ENCODE measurements at regions of chr7 and their contacts with region 1.

Region 1: DNA sequence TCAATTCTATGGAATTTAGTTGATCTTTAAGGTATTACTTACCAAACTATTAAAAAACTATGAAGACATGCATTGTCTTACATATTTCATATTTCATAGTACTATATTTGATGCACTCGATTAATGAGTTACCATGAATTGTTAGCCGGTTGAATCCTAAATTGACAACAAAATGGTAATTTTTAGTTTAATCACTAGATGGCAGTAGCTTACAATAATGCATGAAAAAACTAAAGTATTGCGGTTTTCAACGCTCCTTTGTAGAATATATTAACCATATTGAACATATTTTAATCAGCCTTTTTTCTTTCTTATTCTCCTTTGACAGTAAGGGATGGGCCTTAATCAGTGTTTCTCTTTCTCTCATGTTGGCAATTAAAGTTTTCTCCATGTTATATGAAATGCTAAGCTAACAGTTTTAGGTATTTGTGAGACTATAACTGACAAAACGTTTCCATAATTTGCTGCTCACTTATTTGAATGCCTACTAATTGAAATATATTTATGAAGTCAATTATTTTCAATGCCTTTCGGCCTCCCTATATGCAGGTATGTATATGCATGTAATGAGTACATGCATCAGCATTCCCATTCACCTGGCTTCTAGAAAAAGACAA is 48.5 kb upstream of the ARL4A start:
- DNase-seq: peak in 4 of 5 donors; percentile 47 to 59 (median 54)
- H3K4me3 ChIP-seq: no peak overlapping the region
- H3K4me3 Mint-ChIP-seq: peak overlapping the region in 1 of 8 donors; percentile 22
- H3K27ac ChIP-seq: no peak overlapping the region
- H3K27ac Mint-ChIP-seq: no peak overlapping the region
- H3K4me1 ChIP-seq: peaks cover 17% of the 10 kb centered on the region
- H3K4me1 Mint-ChIP-seq: peaks cover 14 to 34% (median 20%) of the 10 kb centered on the region in 4 donors
- H3K27me3 ChIP-seq: no peaks in the 10 kb centered on the region
- H3K27me3 Mint-ChIP-seq: peaks cover 0 to 2% of the 10 kb centered on the region in 2 donors

Region 2: GRCh38 chr7:11193131-11193811 is 1445.7 kb before region 1 on chr7:
- CTCF ChIA-PET with region 1: no interaction called
- POLR2A ChIA-PET with region 1: no interaction called
- intact Hi-C with region 1: no loop called
- DNase-seq: no peak
- H3K4me3 ChIP-seq: no peak overlapping the region
- H3K4me3 Mint-ChIP-seq: no peak overlapping the region
- H3K27ac ChIP-seq: no peak overlapping the region
- H3K27ac Mint-ChIP-seq: no peak overlapping the region
- H3K4me1 ChIP-seq: no peaks in the 10 kb centered on the region
- H3K4me1 Mint-ChIP-seq: peaks cover 0 to 2% (median 0%) of the 10 kb centered on the region in 4 donors
- H3K27me3 ChIP-seq: no peaks in the 10 kb centered on the region
- H3K27me3 Mint-ChIP-seq: peaks cover 6 to 9% of the 10 kb centered on the region in 2 donors

Region 3: DNA sequence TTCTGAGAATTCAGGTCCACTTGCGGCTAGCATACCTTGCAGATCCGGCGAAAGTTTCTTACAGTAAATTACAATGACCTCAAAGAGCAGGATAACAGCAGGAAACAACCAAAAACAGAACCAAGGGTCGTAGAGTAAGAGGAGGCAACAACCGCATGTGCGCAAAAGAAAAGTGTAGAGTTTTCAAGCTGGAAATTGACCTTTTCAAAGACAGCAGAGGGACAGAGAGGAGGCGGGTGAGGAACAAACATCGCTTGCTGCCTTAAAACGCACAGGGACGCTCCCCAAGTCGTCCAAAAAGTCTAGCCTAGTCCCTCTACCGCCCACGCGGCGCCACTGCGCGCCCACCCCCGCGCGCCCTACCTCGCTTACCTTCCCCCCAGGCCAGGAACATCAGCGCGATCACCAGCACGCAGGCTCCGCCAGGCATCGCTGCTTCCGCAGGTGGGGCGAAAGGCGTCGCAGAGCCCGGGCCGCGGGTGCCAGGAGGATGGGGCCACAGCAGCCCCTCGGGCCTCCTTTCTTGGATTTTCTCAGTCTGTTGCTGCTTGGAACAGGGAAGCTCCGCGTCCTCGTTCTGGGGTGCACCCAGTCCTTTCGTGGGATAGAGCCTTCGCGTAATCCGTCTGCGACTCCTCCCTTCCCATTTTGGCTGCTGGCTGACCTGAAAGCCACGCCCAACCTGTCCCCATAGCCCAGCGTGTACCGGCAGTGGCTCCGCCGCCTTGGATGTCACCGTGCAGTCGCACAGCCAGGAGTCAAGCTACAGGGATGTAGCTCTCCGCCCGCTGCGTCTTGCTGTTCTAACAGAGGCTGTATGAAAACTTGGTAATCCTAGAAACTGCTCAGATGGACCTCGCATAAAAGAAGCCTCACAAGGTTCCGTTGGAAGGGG is 235.4 kb before region 1 on chr7 and contains the start of gene VWDE:
- CTCF ChIA-PET with region 1: no interaction called
- POLR2A ChIA-PET with region 1: no interaction called
- intact Hi-C with region 1: loop called (anchors 5 kb)
- DNase-seq: peak; percentile 31 to 70 (median 44)
- H3K4me3 ChIP-seq: peak within 1 kb of the TSS; percentile 38 to 54
- H3K4me3 Mint-ChIP-seq: peak within 1 kb of the TSS; percentile 82 to 95 (median 90)
- H3K27ac ChIP-seq: peak within 1 kb of the TSS; percentile 29
- H3K27ac Mint-ChIP-seq: peak within 1 kb of the TSS; percentile 30 to 92 (median 82)
- H3K4me1 ChIP-seq: peaks cover 13% of the 10 kb centered on the region
- H3K4me1 Mint-ChIP-seq: peaks cover 12 to 29% (median 17%) of the 10 kb centered on the region in 4 donors
- H3K27me3 ChIP-seq: no peaks in the 10 kb centered on the region
- H3K27me3 Mint-ChIP-seq: peaks cover 6 to 7% of the 10 kb centered on the region in 2 donors
- total RNA-seq, gene VWDE: 8.9 to 9.0 TPM

Region 4: GRCh38 chr7:12524794-12525386 is 114.1 kb before region 1 on chr7:
- CTCF ChIA-PET with region 1: interaction called, 4 read pairs
- POLR2A ChIA-PET with region 1: no interaction called
- intact Hi-C with region 1: loop called (anchors 5 kb)
- DNase-seq: peak in 4 of 5 donors; percentile 27 to 41 (median 33)
- H3K4me3 ChIP-seq: no peak overlapping the region
- H3K4me3 Mint-ChIP-seq: no peak overlapping the region
- H3K27ac ChIP-seq: no peak overlapping the region
- H3K27ac Mint-ChIP-seq: no peak overlapping the region
- H3K4me1 ChIP-seq: no peaks in the 10 kb centered on the region
- H3K4me1 Mint-ChIP-seq: peaks cover 0 to 1% (median 0%) of the 10 kb centered on the region in 4 donors
- H3K27me3 ChIP-seq: peaks cover 5% of the 10 kb centered on the region
- H3K27me3 Mint-ChIP-seq: peaks cover 13 to 20% of the 10 kb centered on the region in 2 donors

Region 5: DNA sequence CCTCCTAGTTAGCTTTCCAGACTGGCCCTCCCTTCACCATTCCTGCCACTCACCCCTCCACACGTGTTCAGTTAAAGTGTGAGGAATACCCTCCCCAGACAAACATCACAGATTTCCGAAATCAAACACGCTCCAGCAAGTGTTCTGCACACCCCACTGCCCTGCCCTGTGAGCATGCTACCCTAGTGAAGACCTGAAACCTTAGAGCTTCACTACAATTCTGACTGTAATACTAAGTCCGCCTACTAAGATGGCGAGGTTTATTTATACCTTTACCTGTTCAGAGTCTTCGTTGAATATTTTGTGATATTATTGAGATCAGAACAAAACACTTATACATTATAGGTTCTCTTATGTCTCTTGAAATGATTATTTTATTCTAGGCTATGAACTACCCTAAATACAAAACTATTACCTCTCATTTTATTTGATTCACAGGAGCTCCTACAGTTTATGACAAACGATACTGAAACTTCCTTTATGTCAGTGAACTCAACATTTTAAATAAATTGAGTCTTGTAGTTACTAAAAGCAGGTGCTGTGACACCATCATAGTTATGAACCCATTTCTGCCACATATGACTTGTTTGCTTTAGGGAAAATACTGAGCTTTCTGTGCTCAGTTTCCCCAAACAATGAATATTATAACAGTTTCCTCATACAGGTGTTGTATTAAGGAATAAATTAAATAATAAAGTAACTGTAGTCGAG is 59.9 kb before region 1 on chr7:
- CTCF ChIA-PET with region 1: no interaction called
- POLR2A ChIA-PET with region 1: no interaction called
- intact Hi-C with region 1: no loop called
- DNase-seq: no peak
- H3K4me3 ChIP-seq: no peak overlapping the region
- H3K4me3 Mint-ChIP-seq: no peak overlapping the region
- H3K27ac ChIP-seq: no peak overlapping the region
- H3K27ac Mint-ChIP-seq: no peak overlapping the region
- H3K4me1 ChIP-seq: no peaks in the 10 kb centered on the region
- H3K4me1 Mint-ChIP-seq: no peaks in the 10 kb centered on the region
- H3K27me3 ChIP-seq: no peaks in the 10 kb centered on the region
- H3K27me3 Mint-ChIP-seq: peaks cover 3 to 7% of the 10 kb centered on the region in 2 donors

Region 6: GRCh38 chr7:12674849-12675248 is 35.9 kb after region 1 on chr7:
- CTCF ChIA-PET with region 1: interaction called, 6 read pairs
- POLR2A ChIA-PET with region 1: no interaction called
- intact Hi-C with region 1: loop called (anchors 1 kb)
- DNase-seq: peak; percentile 68 to 80 (median 70)
- H3K4me3 ChIP-seq: no peak overlapping the region
- H3K4me3 Mint-ChIP-seq: peak overlapping the region in 5 of 8 donors; percentile 4 to 24 (median 14)
- H3K27ac ChIP-seq: no peak overlapping the region
- H3K27ac Mint-ChIP-seq: peak overlapping the region; percentile 6 to 80 (median 67)
- H3K4me1 ChIP-seq: peaks cover 8% of the 10 kb centered on the region
- H3K4me1 Mint-ChIP-seq: peaks cover 11 to 19% (median 15%) of the 10 kb centered on the region in 4 donors
- H3K27me3 ChIP-seq: no peaks in the 10 kb centered on the region
- H3K27me3 Mint-ChIP-seq: no peaks in the 10 kb centered on the region

Region 7: GRCh38 chr7:12809476-12809875 is 170.5 kb after region 1 on chr7:
- CTCF ChIA-PET with region 1: no interaction called
- POLR2A ChIA-PET with region 1: no interaction called
- intact Hi-C with region 1: no loop called
- DNase-seq: no peak
- H3K4me3 ChIP-seq: no peak overlapping the region
- H3K4me3 Mint-ChIP-seq: no peak overlapping the region
- H3K27ac ChIP-seq: no peak overlapping the region
- H3K27ac Mint-ChIP-seq: no peak overlapping the region
- H3K4me1 ChIP-seq: no peaks in the 10 kb centered on the region
- H3K4me1 Mint-ChIP-seq: no peaks in the 10 kb centered on the region
- H3K27me3 ChIP-seq: no peaks in the 10 kb centered on the region
- H3K27me3 Mint-ChIP-seq: no peaks in the 10 kb centered on the region

Region 8: DNA sequence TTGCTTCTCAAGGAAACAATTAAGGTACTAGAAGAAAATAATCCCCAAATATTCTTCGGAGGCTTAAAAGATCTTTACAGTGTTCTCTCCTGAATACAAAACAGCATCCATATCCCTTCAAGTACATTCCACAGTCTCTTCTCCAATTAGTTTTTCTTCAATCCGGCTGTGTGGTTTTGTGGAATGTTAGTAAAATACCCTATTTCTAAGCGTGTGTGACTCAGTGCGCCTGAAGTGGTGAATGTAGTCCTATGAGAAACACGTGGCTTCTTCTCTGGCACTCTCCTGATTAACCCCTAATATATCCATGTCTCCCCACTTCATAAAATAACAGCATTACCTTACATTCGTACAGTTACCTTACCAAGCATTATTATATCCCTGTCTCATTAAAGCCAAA is 618.7 kb after region 1 on chr7:
- CTCF ChIA-PET with region 1: interaction called, 11 read pairs
- POLR2A ChIA-PET with region 1: no interaction called
- intact Hi-C with region 1: no loop called
- DNase-seq: no peak
- H3K4me3 ChIP-seq: no peak overlapping the region
- H3K4me3 Mint-ChIP-seq: no peak overlapping the region
- H3K27ac ChIP-seq: no peak overlapping the region
- H3K27ac Mint-ChIP-seq: no peak overlapping the region
- H3K4me1 ChIP-seq: no peaks in the 10 kb centered on the region
- H3K4me1 Mint-ChIP-seq: no peaks in the 10 kb centered on the region
- H3K27me3 ChIP-seq: no peaks in the 10 kb centered on the region
- H3K27me3 Mint-ChIP-seq: peaks cover 1 to 2% of the 10 kb centered on the region in 2 donors

Region 9: GRCh38 chr7:13262929-13263530 is 624.1 kb after region 1 on chr7:
- CTCF ChIA-PET with region 1: interaction called, 11 read pairs
- POLR2A ChIA-PET with region 1: no interaction called
- intact Hi-C with region 1: loop called (anchors 1 kb)
- DNase-seq: peak in 4 of 5 donors; percentile 40 to 47 (median 46)
- H3K4me3 ChIP-seq: no peak overlapping the region
- H3K4me3 Mint-ChIP-seq: no peak overlapping the region
- H3K27ac ChIP-seq: no peak overlapping the region
- H3K27ac Mint-ChIP-seq: no peak overlapping the region
- H3K4me1 ChIP-seq: no peaks in the 10 kb centered on the region
- H3K4me1 Mint-ChIP-seq: no peaks in the 10 kb centered on the region
- H3K27me3 ChIP-seq: no peaks in the 10 kb centered on the region
- H3K27me3 Mint-ChIP-seq: peaks cover 5 to 7% of the 10 kb centered on the region in 2 donors

Region 10: DNA sequence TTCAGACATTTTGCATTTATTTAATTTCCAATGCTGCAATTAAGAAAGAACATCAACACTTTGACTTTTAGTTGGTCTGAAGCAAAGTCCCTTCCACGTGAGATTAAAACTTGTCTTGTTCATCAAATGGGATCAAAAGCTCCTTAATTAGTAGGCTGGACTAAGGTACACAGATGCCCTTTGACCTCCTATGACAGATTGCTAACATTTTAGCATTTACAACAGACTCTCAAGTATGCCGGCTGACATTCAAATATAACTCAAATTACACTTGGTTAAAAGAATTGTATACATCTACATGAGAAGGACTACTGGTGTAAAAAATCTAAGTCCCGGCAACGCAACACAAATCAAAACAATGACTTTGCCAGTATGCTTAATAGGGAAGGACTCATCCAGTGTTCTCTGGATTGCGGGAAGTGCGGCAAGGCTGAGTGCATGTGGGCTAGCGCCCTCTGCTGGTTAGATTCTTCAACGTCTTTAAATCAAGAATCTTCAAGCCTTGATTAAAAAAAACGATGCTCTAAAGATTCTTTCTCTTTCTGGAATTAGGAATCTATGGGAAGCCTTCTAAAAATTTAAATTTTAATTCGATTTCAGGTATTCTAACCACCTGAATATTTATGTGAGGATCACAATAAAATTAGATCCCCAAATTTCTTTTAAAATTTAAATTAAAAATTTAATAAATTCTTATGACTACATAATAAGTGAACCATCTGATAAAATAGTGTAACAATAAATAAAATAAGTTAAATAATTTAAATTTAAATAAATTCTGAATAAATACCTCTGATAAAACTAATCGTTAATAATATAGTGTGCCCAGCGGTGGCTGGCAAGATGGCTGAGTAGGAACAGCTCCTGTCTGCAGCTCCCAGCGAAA is 1818.9 kb after region 1 on chr7:
- CTCF ChIA-PET with region 1: no interaction called
- POLR2A ChIA-PET with region 1: no interaction called
- intact Hi-C with region 1: loop called (anchors 1 kb)
- DNase-seq: peak in 4 of 5 donors; percentile 37 to 47 (median 46)
- H3K4me3 ChIP-seq: no peak overlapping the region
- H3K4me3 Mint-ChIP-seq: no peak overlapping the region
- H3K27ac ChIP-seq: no peak overlapping the region
- H3K27ac Mint-ChIP-seq: no peak overlapping the region
- H3K4me1 ChIP-seq: no peaks in the 10 kb centered on the region
- H3K4me1 Mint-ChIP-seq: peaks cover 0 to 4% (median 2%) of the 10 kb centered on the region in 4 donors
- H3K27me3 ChIP-seq: no peaks in the 10 kb centered on the region
- H3K27me3 Mint-ChIP-seq: peaks cover 1 to 3% of the 10 kb centered on the region in 2 donors

Measured in CD4-positive, alpha-beta memory T cell (primary cell).